ENCODE measurements at regions of chr1 and their contacts with region 1.

Region 1: DNA sequence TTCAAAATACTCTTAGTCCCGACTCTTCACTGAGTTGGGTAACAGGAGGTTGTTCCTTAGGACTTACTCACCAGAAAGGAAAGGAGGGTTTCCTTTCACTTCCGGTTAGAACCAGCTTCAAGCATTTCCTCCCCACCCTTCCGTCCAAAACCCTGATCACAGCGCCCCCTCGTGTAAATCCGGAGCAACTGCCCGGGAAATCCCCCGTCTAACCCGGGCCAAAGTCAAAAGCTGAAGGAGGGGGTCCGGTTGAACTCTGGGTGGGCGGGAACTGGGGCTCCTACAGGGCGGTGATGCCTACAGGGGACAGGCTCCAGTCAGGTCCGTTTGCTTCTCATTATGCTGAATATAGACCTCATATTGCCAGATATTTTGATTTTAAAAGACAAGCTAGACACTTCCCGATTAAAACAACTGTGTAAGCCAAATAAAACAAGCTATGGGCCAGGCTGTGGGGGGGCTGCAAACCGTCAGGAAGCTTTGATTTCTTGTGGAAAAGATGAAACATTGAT is 15.0 kb upstream of the MTARC2 start:
- DNase-seq: peak; percentile 84
- H3K4me3 ChIP-seq: peak overlapping the region in 1 of 4 donors; percentile 29
- H3K27ac ChIP-seq: peak overlapping the region; percentile 26 to 72 (median 54)
- H3K4me1 ChIP-seq: peaks cover 0 to 28% (median 17%) of the 10 kb centered on the region in 4 donors
- H3K27me3 ChIP-seq: no peaks in the 10 kb centered on the region
- CTCF ChIP-seq: peak; percentile 82 to 93 (median 91)
- EP300 ChIP-seq: no peak
- POLR2A ChIP-seq: no peak

Region 2: DNA sequence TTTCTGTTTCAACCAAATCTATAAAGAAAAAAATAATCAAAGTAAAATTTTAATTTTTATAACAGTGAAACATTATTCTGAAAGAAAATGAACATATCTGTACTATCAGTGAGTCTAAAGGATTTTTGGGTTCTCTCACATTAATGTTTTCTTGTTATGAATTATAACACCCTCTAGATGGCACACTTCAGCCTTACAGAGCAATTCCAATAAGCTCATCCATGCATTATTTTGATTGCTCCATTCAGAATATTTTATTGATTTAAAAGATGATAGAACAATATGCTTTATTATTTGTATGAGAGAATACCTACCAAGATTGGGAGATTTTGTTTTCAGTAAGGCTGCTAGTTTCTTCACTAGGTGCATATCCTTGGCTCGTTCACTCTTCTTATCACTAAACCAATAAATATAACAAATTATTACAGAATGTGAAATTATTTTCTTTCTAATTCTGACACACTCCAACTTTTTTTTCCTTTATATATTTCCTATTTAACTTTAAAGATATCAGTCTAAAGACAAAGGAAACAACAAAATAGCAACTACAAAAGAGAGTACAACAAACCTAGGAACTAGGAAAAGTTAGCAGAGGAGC is 543.3 kb before region 1 on chr1:
- in situ Hi-C with region 1: no loop called
- intact Hi-C with region 1: no loop called
- DNase-seq: no peak
- H3K4me3 ChIP-seq: no peak overlapping the region
- H3K27ac ChIP-seq: no peak overlapping the region
- H3K4me1 ChIP-seq: no peaks in the 10 kb centered on the region
- H3K27me3 ChIP-seq: no peaks in the 10 kb centered on the region
- CTCF ChIP-seq: peak; percentile 16 to 36 (median 23)
- EP300 ChIP-seq: no peak
- POLR2A ChIP-seq: no peak

Region 3: DNA sequence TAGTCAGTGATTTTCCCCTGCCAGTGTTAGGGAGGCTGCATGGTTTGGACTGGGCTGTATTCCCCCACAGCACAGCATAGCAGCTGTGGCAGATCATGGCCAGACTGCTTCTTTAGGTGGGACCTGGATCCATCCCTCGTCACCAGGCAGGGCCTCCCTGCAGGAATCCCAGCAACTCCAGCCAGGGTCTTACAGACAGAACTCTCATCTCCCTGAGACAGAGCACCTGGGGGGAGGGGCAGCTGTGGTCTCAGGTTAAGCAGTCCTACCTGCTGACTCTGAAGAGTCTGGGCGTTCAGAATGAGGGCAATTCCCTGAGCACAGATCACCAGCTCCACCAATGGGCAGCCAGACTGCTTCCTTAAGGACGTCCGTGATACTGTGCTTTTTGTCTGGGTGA is 90.9 kb before region 1 on chr1:
- in situ Hi-C with region 1: no loop called
- intact Hi-C with region 1: no loop called
- DNase-seq: no peak
- H3K4me3 ChIP-seq: no peak overlapping the region
- H3K27ac ChIP-seq: no peak overlapping the region
- H3K4me1 ChIP-seq: no peaks in the 10 kb centered on the region
- H3K27me3 ChIP-seq: no peaks in the 10 kb centered on the region
- CTCF ChIP-seq: no peak
- EP300 ChIP-seq: no peak
- POLR2A ChIP-seq: no peak

Region 4: GRCh38 chr1:220680085-220680687 is 53.0 kb before region 1 on chr1:
- in situ Hi-C with region 1: loop called in 1 of 4 experiments (anchors 10 kb)
- intact Hi-C with region 1: no loop called
- DNase-seq: no peak
- H3K4me3 ChIP-seq: no peak overlapping the region
- H3K27ac ChIP-seq: no peak overlapping the region
- H3K4me1 ChIP-seq: peaks cover 0 to 4% (median 0%) of the 10 kb centered on the region in 4 donors
- H3K27me3 ChIP-seq: no peaks in the 10 kb centered on the region
- CTCF ChIP-seq: peak; percentile 65 to 73 (median 71)
- EP300 ChIP-seq: no peak
- POLR2A ChIP-seq: no peak

Measured in transverse colon (tissue), 4 donors.